ENCODE measurements at regions of chr5 and their contacts with region 1.

Region 1: GRCh38 chr5:923281-923873 is 30.7 kb downstream of the TRIP13 start:
- DNase-seq: peak; percentile 73
- ATAC-seq: peak; percentile 80
- H3K4me3 ChIP-seq: no peak overlapping the region
- H3K4me3 Mint-ChIP-seq: no peak overlapping the region
- H3K27ac ChIP-seq: no peak overlapping the region
- H3K27ac Mint-ChIP-seq: no peak overlapping the region
- H3K4me1 ChIP-seq: peaks cover 10 to 15% of the 10 kb centered on the region in 2 donors
- H3K4me1 Mint-ChIP-seq: peaks cover 3% of the 10 kb centered on the region
- H3K27me3 ChIP-seq: peaks cover 0 to 20% (median 10%) of the 10 kb centered on the region in 4 experiments
- H3K27me3 Mint-ChIP-seq: peaks cover 27% of the 10 kb centered on the region
- CTCF ChIP-seq: peak; percentile 80

Region 2: DNA sequence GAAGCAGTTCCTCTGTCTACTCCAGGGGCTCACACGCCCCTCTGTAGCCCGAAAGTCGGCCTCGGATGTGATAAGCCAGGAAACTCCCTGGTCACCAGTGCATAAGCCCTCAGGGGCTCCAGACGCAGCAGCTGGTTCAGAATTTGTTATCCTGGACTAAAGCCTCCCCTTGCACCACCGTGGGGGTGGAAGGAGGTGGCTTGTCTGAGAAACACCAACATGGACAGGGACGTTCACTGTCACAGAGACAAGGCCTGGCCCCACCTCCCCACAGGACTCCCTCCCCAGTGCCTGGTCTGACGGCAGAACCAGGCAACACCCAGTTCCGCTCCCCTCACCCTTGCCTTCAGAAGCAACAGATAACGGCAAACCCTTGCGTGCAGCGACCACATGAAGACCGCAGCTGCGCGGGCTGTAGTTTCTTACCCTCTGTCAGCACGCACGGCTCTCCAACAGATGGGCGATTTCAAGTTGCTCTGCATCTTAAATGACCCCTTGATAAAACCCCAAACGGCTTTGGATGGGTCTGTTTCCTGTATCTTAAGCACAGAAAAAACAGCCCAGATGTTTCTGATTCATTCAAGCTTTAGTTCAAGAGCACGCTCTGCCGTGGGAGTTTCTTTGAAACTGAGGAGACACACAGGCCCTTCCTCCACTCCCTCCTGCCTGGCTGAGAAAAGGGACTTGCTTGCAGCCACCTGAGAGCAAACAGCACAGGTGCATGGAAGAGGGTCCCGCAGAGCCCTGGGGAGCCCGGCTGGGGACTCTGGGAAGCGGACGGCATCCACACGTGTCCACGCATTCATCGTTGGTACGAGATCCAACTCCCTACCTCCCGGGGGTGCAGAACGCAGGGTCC is 40.5 kb after region 1 on chr5:
- CTCF ChIA-PET with region 1: no interaction called
- POLR2A ChIA-PET with region 1: no interaction called
- intact Hi-C with region 1: no loop called
- DNase-seq: peak; percentile 27
- ATAC-seq: peak; percentile 39
- H3K4me3 ChIP-seq: no peak overlapping the region
- H3K4me3 Mint-ChIP-seq: no peak overlapping the region
- H3K27ac ChIP-seq: no peak overlapping the region
- H3K27ac Mint-ChIP-seq: no peak overlapping the region
- H3K4me1 ChIP-seq: peaks cover 0 to 8% of the 10 kb centered on the region in 2 donors
- H3K4me1 Mint-ChIP-seq: peaks cover 10% of the 10 kb centered on the region
- H3K27me3 ChIP-seq: peaks cover 0 to 70% (median 16%) of the 10 kb centered on the region in 4 experiments
- H3K27me3 Mint-ChIP-seq: peaks cover 64% of the 10 kb centered on the region
- CTCF ChIP-seq: no peak

Region 3: GRCh38 chr5:1134478-1134877 is 211.1 kb after region 1 on chr5:
- CTCF ChIA-PET with region 1: interaction called, 14 read pairs
- POLR2A ChIA-PET with region 1: no interaction called
- intact Hi-C with region 1: loop called (anchors 2 kb)
- DNase-seq: peak; percentile 83
- ATAC-seq: peak; percentile 80
- H3K4me3 ChIP-seq: no peak overlapping the region
- H3K4me3 Mint-ChIP-seq: peak overlapping the region; percentile 58
- H3K27ac ChIP-seq: no peak overlapping the region
- H3K27ac Mint-ChIP-seq: peak overlapping the region; percentile 38
- H3K4me1 ChIP-seq: peaks cover 34 to 50% of the 10 kb centered on the region in 2 donors
- H3K4me1 Mint-ChIP-seq: peaks cover 43% of the 10 kb centered on the region
- H3K27me3 ChIP-seq: peaks cover 0 to 7% (median 3%) of the 10 kb centered on the region in 4 experiments
- H3K27me3 Mint-ChIP-seq: peaks cover 15% of the 10 kb centered on the region
- CTCF ChIP-seq: peak; percentile 53

Region 4: DNA sequence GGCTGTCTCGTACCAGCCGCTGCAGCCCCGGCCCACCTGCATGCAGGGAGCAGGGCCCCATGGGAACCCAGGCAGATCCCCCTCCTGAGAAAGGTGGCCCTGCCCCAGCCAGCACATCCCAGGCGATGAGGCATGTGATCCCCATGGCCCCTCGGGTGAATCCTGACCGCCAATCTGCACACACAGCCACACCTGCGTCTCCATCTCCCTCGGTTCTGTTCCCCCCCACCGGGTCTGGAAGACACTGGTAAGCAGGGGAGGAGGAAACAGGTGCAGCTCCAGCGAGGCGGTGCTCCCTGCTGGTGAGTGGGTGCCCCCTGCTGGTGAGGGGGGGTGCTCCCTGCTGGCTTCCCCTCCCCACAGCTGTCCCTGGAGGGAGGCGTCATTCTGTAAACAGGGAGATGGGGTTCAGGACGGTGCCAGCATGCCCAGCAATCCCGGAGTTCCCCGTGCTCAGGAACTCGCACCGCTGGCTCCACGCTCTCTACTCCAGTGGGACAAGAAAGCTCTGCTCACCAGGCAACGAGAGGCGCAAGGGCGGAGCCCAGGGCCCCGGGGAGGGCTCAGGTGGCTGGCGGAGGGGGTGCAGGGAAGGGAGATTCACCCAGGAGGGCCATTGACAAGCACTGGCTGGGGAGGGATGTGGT is 216.9 kb after region 1 on chr5:
- CTCF ChIA-PET with region 1: interaction called, 29 read pairs
- POLR2A ChIA-PET with region 1: no interaction called
- intact Hi-C with region 1: loop called (anchors 1 kb)
- DNase-seq: peak; percentile 82
- ATAC-seq: peak; percentile 86
- H3K4me3 ChIP-seq: peak overlapping the region in 1 of 5 experiments; percentile 12
- H3K4me3 Mint-ChIP-seq: peak overlapping the region; percentile 78
- H3K27ac ChIP-seq: no peak overlapping the region
- H3K27ac Mint-ChIP-seq: peak overlapping the region; percentile 42
- H3K4me1 ChIP-seq: peaks cover 26 to 41% of the 10 kb centered on the region in 2 donors
- H3K4me1 Mint-ChIP-seq: peaks cover 29% of the 10 kb centered on the region
- H3K27me3 ChIP-seq: peaks cover 0 to 8% (median 2%) of the 10 kb centered on the region in 4 experiments
- H3K27me3 Mint-ChIP-seq: peaks cover 18% of the 10 kb centered on the region
- CTCF ChIP-seq: peak; percentile 70

Region 5: GRCh38 chr5:1174122-1174936 is 251.0 kb after region 1 on chr5:
- CTCF ChIA-PET with region 1: interaction called, 20 read pairs
- POLR2A ChIA-PET with region 1: no interaction called
- intact Hi-C with region 1: loop called (anchors 1 kb)
- DNase-seq: peak; percentile 59
- ATAC-seq: peak; percentile 51
- H3K4me3 ChIP-seq: no peak overlapping the region
- H3K4me3 Mint-ChIP-seq: no peak overlapping the region
- H3K27ac ChIP-seq: no peak overlapping the region
- H3K27ac Mint-ChIP-seq: no peak overlapping the region
- H3K4me1 ChIP-seq: no peaks in the 10 kb centered on the region
- H3K4me1 Mint-ChIP-seq: peaks cover 2% of the 10 kb centered on the region
- H3K27me3 ChIP-seq: peaks cover 0 to 10% (median 1%) of the 10 kb centered on the region in 4 experiments
- H3K27me3 Mint-ChIP-seq: no peaks in the 10 kb centered on the region
- CTCF ChIP-seq: peak; percentile 69

Measured in B cell (primary cell).